BJ (cell line): ENCODE measurements at regions of chr5 and their contacts with region 1.

Region 1: DNA sequence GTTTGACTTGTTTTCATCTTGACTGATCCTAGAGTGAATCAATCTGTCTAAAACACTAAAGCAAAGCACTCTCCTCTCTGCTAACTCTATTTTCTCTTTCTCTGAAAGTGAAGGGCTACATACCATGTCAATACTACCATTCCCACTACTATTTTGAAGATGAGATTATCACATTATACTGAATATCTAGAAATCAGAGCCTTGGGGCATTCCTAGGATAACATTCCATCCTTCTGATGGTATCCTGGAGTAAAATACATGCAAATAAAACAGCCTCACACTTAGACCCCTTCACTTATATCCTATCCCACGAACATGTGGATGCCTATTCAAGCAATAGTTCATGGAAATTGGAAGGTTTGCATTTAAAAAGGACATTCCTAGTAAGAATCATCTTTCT is 309.3 kb upstream of the ACTBL2 start:
- DNase-seq: no peak
- H3K4me3 ChIP-seq: no peak overlapping the region
- H3K27me3 ChIP-seq: no peaks in the 10 kb centered on the region
- CTCF ChIP-seq: no peak

Region 2: GRCh38 chr5:57900381-57900944 is 108.6 kb after region 1 on chr5:
- CTCF ChIA-PET with region 1: no interaction called
- POLR2A ChIA-PET with region 1: no interaction called
- DNase-seq: no peak
- H3K4me3 ChIP-seq: no peak overlapping the region
- H3K27me3 ChIP-seq: no peaks in the 10 kb centered on the region
- CTCF ChIP-seq: no peak

Region 3: DNA sequence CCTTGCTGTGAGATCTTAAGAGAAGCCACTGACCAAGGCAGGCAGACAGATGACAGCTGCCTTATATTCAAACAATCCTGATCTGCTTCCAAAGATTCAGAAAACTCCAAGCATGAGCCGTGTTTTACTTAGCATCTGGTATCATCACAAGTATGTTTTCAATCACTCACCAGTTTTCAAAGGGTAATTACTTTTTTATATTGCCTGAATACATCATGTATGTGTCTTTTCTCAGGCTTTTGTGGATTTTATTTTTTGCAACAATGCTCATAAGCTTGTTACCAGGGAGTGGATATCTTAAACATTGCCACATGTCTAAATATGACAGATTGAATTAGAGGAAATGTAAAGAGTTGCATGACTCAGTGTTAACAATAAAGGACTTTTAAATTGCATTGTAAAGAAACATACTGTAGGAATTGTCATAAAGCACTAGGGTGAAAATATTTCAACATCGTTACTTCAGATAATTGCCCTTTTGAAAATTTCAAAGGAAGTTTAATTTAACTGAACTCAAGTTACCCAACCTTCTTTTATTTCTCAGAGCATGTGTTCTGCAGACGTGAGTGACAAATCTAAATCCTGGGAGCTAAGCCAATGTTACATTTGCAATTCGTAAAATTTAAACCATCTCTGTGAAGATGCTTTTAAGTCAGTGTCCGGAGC is 341.9 kb after region 1 on chr5:
- CTCF ChIA-PET with region 1: no interaction called
- POLR2A ChIA-PET with region 1: interaction called, 11 read pairs
- DNase-seq: peak; percentile 87
- H3K4me3 ChIP-seq: no peak overlapping the region
- H3K27me3 ChIP-seq: no peaks in the 10 kb centered on the region; the same call in 1 of the 2 replicates
- CTCF ChIP-seq: no peak